ENCODE measurements at regions of chr11 and their contacts with region 1.

Region 1: DNA sequence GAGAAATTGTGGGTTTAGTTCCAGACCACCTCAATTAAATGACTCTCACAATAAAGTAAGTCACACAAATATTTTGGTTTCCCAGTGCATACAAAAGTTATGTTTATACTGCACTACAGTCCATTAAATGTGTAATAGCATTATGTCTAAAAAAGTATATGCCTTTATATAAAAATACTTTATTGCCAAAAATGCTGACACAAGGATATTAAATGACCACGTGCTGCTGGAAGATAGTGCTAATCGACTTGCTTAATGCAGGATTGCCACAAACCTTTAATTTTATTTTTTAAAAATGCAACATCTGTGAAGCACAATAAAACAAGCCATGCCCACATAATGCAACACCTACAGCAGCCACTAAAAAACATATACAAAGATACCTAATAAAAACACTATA is 27.0 kb downstream of the OR5AK2 start:
- DNase-seq: no peak
- ATAC-seq: no peak

Region 2: GRCh38 chr11:56799691-56800210 is 215.9 kb before region 1 on chr11:
- intact Hi-C with region 1: no loop called
- DNase-seq: no peak
- ATAC-seq: no peak

Region 3: GRCh38 chr11:56890584-56891305 is 124.9 kb before region 1 on chr11:
- intact Hi-C with region 1: loop called in 1 of 2 experiments (anchors 10 kb)
- DNase-seq: no peak
- ATAC-seq: no peak

Region 4: GRCh38 chr11:57269571-57270021 is 253.9 kb after region 1 on chr11:
- intact Hi-C with region 1: no loop called
- DNase-seq: no peak
- ATAC-seq: peak in 1 of 2 donors; percentile 38

Measured in left cardiac atrium (tissue), 4 donors.